ENCODE measurements at regions of chr17 and their contacts with region 1.

Region 1: GRCh38 chr17:39450847-39451581 is at the start of gene MED1:
- DNase-seq: peak; percentile 97
- total RNA-seq, gene MED1: 22.0 and 22.5 TPM in 2 replicates

Region 2: GRCh38 chr17:39365242-39365641 is 85.8 kb before region 1 on chr17:
- in situ Hi-C with region 1: no loop called
- DNase-seq: no peak

Region 3: GRCh38 chr17:39404542-39405378 is 46.3 kb before region 1 on chr17:
- in situ Hi-C with region 1: loop called (anchors 5 kb)
- DNase-seq: no peak